ENCODE measurements at regions of chr7 and their contacts with region 1.

Region 1: GRCh38 chr7:5665094-5666025 is 116.1 kb downstream of the RNF216 start:
- DNase-seq: peak; percentile 84
- H3K4me3 Mint-ChIP-seq: no peak overlapping the region
- H3K27ac Mint-ChIP-seq: no peak overlapping the region
- H3K4me1 Mint-ChIP-seq: no peaks in the 10 kb centered on the region
- H3K27me3 Mint-ChIP-seq: no peaks in the 10 kb centered on the region
- CTCF ChIP-seq: peak; percentile 91

Region 2: DNA sequence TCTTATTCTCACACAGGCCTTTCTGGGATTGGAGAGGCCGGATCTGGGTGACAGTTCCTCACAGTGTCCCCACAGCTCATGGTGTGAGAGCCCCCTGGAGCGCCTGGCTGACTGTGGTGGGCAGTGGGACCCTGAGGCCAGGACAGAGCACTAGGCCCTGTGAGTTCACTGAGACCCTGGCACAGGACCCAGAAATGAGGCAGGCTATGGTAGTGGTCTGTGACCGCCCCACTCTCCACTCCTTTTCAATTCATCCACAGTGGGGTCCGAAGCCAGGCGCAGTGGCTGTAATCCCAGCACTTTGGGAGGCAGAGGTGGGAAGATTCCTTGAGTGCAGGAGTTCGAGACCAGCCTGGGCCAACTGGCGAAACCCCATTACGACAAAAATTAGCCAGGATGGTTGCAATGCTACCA is 145.8 kb before region 1 on chr7:
- CTCF ChIA-PET with region 1: no interaction called
- POLR2A ChIA-PET with region 1: no interaction called
- intact Hi-C with region 1: no loop called
- DNase-seq: no peak
- H3K4me3 Mint-ChIP-seq: no peak overlapping the region
- H3K27ac Mint-ChIP-seq: no peak overlapping the region
- H3K4me1 Mint-ChIP-seq: no peaks in the 10 kb centered on the region
- H3K27me3 Mint-ChIP-seq: no peaks in the 10 kb centered on the region
- CTCF ChIP-seq: no peak

Region 3: GRCh38 chr7:5596046-5596895 is 69.1 kb before region 1 on chr7:
- CTCF ChIA-PET with region 1: interaction called, 15 read pairs
- POLR2A ChIA-PET with region 1: interaction called, 3 read pairs
- intact Hi-C with region 1: no loop called
- DNase-seq: peak; percentile 95
- H3K4me3 Mint-ChIP-seq: peak overlapping the region; percentile 92
- H3K27ac Mint-ChIP-seq: peak overlapping the region; percentile 93
- H3K4me1 Mint-ChIP-seq: peaks cover 30% of the 10 kb centered on the region
- H3K27me3 Mint-ChIP-seq: no peaks in the 10 kb centered on the region
- CTCF ChIP-seq: no peak

Region 4: DNA sequence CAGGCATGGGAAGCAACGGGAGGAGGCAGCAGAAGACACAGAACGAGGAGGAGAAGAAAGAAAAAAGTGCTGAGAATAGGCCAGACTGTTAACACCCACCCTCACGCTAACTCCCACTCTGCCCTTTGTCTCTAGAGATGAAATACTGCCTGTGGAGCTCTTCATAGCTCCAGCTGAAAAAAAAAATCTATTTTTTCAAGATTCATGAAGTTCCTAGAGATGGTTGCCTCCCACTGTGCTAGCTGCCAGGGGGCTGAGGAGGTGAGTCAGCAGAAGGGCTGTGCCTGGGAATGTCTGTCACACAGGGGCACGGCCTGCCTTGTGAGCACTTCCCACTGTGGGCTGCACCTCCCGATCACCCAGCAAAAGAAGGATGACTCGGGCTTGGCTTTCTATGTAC is 28.4 kb before region 1 on chr7:
- CTCF ChIA-PET with region 1: interaction called, 14 read pairs
- POLR2A ChIA-PET with region 1: no interaction called
- intact Hi-C with region 1: no loop called
- DNase-seq: peak; percentile 64
- H3K4me3 Mint-ChIP-seq: no peak overlapping the region
- H3K27ac Mint-ChIP-seq: peak overlapping the region; percentile 52
- H3K4me1 Mint-ChIP-seq: peaks cover 21% of the 10 kb centered on the region
- H3K27me3 Mint-ChIP-seq: no peaks in the 10 kb centered on the region
- CTCF ChIP-seq: no peak

Region 5: GRCh38 chr7:5646852-5647251 is 18.5 kb before region 1 on chr7:
- CTCF ChIA-PET with region 1: interaction called, 16 read pairs
- POLR2A ChIA-PET with region 1: interaction called, 8 read pairs
- intact Hi-C with region 1: no loop called
- DNase-seq: peak; percentile 95
- H3K4me3 Mint-ChIP-seq: peak overlapping the region; percentile 8
- H3K27ac Mint-ChIP-seq: peak overlapping the region; percentile 84
- H3K4me1 Mint-ChIP-seq: peaks cover 25% of the 10 kb centered on the region
- H3K27me3 Mint-ChIP-seq: no peaks in the 10 kb centered on the region
- CTCF ChIP-seq: no peak

Region 6: DNA sequence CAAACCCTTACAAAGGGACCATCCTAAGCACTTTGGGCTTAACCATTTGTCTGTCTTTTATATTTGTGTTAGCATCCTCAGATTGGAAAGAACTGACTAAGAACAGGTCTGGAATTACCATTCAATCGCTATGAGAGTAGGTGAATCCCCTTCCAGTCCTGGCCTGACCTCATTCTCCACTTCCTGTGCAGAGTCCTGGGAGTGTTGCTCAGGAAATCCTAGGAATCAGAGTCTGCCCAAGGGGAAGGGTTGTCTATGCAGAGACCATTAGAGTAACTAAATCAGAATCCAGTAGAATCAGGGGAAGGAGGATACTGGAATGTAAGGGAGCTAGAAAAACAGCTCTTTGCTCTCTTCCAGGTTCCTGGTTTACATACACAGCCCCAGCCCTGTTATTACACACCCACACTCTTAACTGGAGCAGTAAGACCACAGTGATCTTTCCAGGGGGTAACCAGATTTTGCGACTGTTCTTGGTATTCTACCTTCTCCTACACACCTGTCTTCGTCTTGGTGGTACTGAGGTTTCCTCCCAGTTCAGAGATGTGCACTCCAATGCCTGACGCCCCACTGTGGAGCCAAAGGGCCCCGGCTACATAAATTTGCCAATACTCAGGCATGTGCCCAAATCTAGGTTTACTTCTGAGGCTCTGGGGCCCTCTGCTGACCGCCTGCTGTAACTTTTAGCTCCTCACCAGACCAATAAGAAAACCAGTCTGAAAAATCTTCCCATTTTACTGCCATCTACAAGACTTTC is 12.4 kb after region 1 on chr7:
- CTCF ChIA-PET with region 1: interaction called, 28 read pairs
- POLR2A ChIA-PET with region 1: interaction called, 3 read pairs
- intact Hi-C with region 1: no loop called
- DNase-seq: peak; percentile 76
- H3K4me3 Mint-ChIP-seq: no peak overlapping the region
- H3K27ac Mint-ChIP-seq: peak overlapping the region; percentile 39
- H3K4me1 Mint-ChIP-seq: peaks cover 12% of the 10 kb centered on the region
- H3K27me3 Mint-ChIP-seq: no peaks in the 10 kb centered on the region
- CTCF ChIP-seq: peak; percentile 75

Region 7: GRCh38 chr7:5694912-5695726 is 29.8 kb after region 1 on chr7:
- CTCF ChIA-PET with region 1: interaction called, 4 read pairs
- POLR2A ChIA-PET with region 1: interaction called, 11 read pairs
- intact Hi-C with region 1: loop called (anchors 5 kb)
- DNase-seq: no peak
- H3K4me3 Mint-ChIP-seq: no peak overlapping the region
- H3K27ac Mint-ChIP-seq: no peak overlapping the region
- H3K4me1 Mint-ChIP-seq: peaks cover 47% of the 10 kb centered on the region
- H3K27me3 Mint-ChIP-seq: no peaks in the 10 kb centered on the region
- CTCF ChIP-seq: no peak

Region 8: DNA sequence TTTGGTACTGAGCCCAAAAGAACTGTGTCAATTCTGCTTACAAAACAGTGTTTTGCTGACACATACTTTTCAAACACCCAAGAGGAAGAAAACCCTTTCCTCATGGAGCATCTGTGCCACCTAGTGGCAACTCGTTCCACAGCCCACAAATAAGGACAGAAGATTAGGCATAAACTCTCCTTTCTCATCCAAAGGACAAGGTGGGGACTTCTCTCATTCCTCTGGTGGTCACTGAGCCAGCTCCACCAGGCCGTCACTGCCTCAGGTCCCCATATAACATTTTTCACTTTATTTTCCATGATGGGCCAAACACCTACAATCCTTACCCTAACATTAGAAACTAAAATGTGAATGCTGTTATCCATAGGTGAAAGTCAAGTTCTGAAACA is 39.2 kb after region 1 on chr7:
- CTCF ChIA-PET with region 1: interaction called, 31 read pairs
- POLR2A ChIA-PET with region 1: no interaction called
- intact Hi-C with region 1: loop called (anchors 5 kb)
- DNase-seq: peak; percentile 86
- H3K4me3 Mint-ChIP-seq: no peak overlapping the region
- H3K27ac Mint-ChIP-seq: no peak overlapping the region
- H3K4me1 Mint-ChIP-seq: peaks cover 31% of the 10 kb centered on the region
- H3K27me3 Mint-ChIP-seq: no peaks in the 10 kb centered on the region
- CTCF ChIP-seq: peak; percentile 69

Region 9: DNA sequence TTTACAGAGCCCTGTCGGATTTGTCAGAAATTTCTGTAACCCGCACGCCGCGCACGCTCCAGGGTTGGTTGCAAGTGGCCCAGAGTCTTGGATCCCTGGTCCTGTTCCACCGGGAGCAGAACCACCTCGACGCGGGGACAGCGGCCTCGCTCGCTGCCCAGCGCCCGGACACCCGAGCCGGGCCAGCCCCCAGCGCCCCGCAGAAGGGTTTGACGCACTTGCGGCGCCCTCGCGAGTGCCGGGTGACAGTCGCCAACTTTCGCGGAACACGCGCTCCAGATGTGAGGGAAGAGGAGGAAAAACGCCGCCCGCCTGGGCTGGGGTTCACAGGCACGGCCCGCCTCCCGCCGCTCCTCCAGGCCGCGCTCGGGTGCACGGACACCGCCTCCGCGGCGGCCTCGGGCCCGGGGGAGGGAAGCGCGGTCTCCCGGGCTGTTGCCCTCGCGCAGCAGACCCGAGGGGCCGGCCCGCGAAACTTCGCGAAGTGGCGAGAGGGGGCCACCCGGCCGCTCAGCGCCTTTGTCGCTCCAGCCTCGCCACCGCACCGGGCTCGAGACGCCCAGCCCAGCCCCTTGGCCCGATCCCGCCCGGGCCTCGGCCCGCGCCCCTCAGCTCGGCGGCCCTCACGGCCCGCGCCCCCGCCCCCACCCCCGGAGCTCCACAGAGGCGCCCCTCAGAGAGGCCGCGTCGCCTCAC is 115.6 kb after region 1 on chr7:
- CTCF ChIA-PET with region 1: no interaction called
- POLR2A ChIA-PET with region 1: no interaction called
- intact Hi-C with region 1: no loop called
- DNase-seq: peak; percentile 26
- H3K4me3 Mint-ChIP-seq: peak overlapping the region; percentile 81
- H3K27ac Mint-ChIP-seq: peak overlapping the region; percentile 69
- H3K4me1 Mint-ChIP-seq: peaks cover 11% of the 10 kb centered on the region
- H3K27me3 Mint-ChIP-seq: no peaks in the 10 kb centered on the region
- CTCF ChIP-seq: no peak